Activated naive CD8-positive, alpha-beta T cell treated with anti-CD3 and anti-CD28 coated beads, Interleukin-2, amount 10 ng/mL, durations not matched to agents 7 days and 5 days (primary cell): ENCODE measurements at regions of chr11 and their contacts with region 1.

Region 1: DNA sequence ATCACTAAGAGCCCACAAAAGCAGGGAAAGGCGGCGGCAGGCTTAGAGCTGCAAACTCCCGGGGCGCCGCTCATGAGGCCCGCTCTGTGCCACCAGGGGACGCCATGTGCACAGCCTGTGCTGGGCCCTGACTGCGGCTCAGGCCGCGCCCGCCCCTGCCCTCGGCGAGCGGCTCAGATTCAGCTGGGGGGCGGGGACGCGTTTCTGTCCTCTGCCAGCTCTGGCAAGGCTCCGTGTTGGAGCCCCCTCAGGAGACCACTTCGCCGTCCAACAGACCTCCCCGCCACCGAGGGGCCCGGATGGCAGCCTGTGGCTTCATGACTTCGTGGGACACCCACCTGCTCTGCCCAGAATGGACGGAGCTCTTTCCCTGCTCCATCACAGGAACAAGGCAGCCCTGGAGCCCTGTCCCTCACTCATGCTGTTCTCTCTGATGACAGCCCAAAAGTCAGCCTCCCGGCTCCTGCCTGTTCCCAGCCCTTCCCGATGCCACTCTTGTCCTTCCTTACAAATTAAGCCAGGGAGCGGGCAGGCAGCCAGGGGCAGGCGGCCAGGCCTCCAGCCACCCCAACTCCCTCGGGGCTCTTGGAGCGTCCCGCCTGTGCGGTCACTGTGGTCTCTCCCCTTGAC is 69.1 kb downstream of the NAT10 start:
- DNase-seq: peak; percentile 89
- ATAC-seq: peak; percentile 99
- H3K4me3 Mint-ChIP-seq: peak overlapping the region; percentile 66
- H3K27ac Mint-ChIP-seq: no peak overlapping the region
- H3K4me1 Mint-ChIP-seq: peaks cover 10% of the 10 kb centered on the region
- H3K27me3 Mint-ChIP-seq: peaks cover 4% of the 10 kb centered on the region

Region 2: DNA sequence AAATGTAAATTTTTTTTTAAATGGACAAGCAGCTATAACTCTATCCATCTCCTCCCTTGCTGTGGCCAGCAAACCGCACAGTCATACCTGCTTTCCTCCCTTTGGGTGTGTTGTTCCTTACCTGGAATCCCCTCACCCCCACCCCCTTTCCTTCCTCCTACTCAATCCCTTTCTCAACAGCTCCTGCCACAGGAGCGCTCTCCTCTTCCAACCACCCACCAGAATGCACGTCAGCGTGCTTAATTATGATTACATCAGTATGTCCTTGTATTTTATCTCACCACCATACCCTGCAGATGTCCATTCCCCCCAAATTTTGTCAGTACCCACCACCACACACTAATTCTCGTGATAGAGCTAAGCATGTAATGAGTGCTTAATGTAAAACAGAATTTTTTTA is 221.7 kb before region 1 on chr11:
- POLR2A ChIA-PET with region 1: interaction called, 10 read pairs
- DNase-seq: no peak
- ATAC-seq: no peak
- H3K4me3 Mint-ChIP-seq: no peak overlapping the region
- H3K27ac Mint-ChIP-seq: no peak overlapping the region
- H3K4me1 Mint-ChIP-seq: no peaks in the 10 kb centered on the region
- H3K27me3 Mint-ChIP-seq: peaks cover 27% of the 10 kb centered on the region

Region 3: GRCh38 chr11:34068111-34068510 is 106.4 kb before region 1 on chr11:
- POLR2A ChIA-PET with region 1: no interaction called
- DNase-seq: no peak
- ATAC-seq: no peak
- H3K4me3 Mint-ChIP-seq: no peak overlapping the region
- H3K27ac Mint-ChIP-seq: peak overlapping the region; percentile 8
- H3K4me1 Mint-ChIP-seq: peaks cover 34% of the 10 kb centered on the region
- H3K27me3 Mint-ChIP-seq: no peaks in the 10 kb centered on the region

Region 4: GRCh38 chr11:34250732-34251639 is 76.5 kb after region 1 on chr11:
- POLR2A ChIA-PET with region 1: interaction called, 10 read pairs
- DNase-seq: peak; percentile 67
- ATAC-seq: peak; percentile 90
- H3K4me3 Mint-ChIP-seq: peak overlapping the region; percentile 72
- H3K27ac Mint-ChIP-seq: peak overlapping the region; percentile 58
- H3K4me1 Mint-ChIP-seq: peaks cover 53% of the 10 kb centered on the region
- H3K27me3 Mint-ChIP-seq: peaks cover 8% of the 10 kb centered on the region

Region 5: DNA sequence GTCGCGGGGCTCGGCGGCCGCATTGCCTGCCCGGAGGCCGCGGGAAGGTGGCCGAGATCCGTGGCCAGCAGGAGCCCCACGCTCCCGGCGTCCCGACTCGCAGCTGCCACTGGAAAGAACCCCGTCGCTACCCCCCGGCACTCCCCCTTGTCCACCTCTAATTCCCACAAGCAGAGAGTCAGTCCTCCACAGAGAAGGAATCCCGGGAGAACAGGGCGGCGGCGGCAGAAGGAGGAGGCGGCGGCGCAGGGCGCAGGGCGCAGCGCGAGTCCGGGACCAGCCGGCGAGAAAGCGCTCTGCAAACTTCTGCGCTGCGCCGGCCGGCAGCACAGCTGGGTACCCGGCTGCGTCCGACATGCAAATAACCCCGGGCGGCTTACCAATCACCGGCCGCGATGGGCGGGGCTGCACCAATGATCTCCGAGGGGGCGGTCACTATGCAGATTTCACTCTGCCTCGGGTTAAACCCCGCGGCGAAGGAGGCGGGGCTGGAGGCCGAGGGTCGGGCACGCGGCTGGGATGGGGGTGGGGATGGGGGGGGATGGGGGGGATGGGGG is 183.3 kb after region 1 on chr11 and contains the start of gene ABTB2:
- POLR2A ChIA-PET with region 1: interaction called, 28 read pairs
- DNase-seq: peak; percentile 98
- ATAC-seq: peak; percentile 93
- H3K4me3 Mint-ChIP-seq: peak within 1 kb of the TSS; percentile 88
- H3K27ac Mint-ChIP-seq: peak within 1 kb of the TSS; percentile 84
- H3K4me1 Mint-ChIP-seq: peaks cover 18% of the 10 kb centered on the region
- H3K27me3 Mint-ChIP-seq: peaks cover 53% of the 10 kb centered on the region
- total RNA-seq, gene ABTB2: 0.91 to 0.97 TPM